IMR-90 (cell line): ENCODE measurements at regions of chr16 and their contacts with region 1.

Region 1: DNA sequence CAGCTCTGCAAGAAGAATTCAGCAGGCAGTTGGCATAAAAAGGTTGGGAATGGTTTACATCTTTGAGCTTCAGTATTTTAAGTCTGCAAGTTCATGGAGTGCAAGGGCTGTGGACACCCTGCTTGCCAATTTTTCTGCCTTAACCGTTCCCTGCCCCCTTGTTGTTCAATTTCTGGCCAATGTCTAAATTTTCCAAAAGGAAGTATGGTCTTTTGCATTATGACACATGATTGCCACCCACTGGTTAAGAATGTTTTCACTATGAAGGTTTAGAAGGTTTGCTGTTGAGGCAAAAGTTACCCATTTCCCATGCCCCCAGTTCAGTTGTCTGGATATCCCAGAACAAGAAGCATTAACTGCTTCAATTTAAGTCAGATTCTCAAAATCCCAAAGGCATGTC is 441.9 kb downstream of the CDH13 start:
- DNase-seq: peak; percentile 46
- ATAC-seq: peak; percentile 40; the same call in 1 of the 2 replicates
- H3K4me3 ChIP-seq: no peak overlapping the region
- H3K27ac ChIP-seq: no peak overlapping the region
- H3K4me1 ChIP-seq: peaks cover 2% of the 10 kb centered on the region; the same call in 1 of the 2 replicates
- H3K27me3 ChIP-seq: no peaks in the 10 kb centered on the region
- CTCF ChIP-seq: peak; percentile 54
- POLR2A ChIP-seq: no peak
- RAD21 ChIP-seq: peak; percentile 56

Region 2: GRCh38 chr16:82456683-82457082 is 612.0 kb before region 1 on chr16:
- CTCF ChIA-PET with region 1: no interaction called
- POLR2A ChIA-PET with region 1: no interaction called
- dilution Hi-C with region 1: no loop called
- in situ Hi-C with region 1: no loop called
- intact Hi-C with region 1: loop called (anchors 2 kb)
- DNase-seq: peak; percentile 36
- ATAC-seq: peak; percentile 93
- H3K4me3 ChIP-seq: no peak overlapping the region
- H3K27ac ChIP-seq: no peak overlapping the region
- H3K4me1 ChIP-seq: no peaks in the 10 kb centered on the region
- H3K27me3 ChIP-seq: peaks cover 1% of the 10 kb centered on the region
- CTCF ChIP-seq: peak; percentile 61
- POLR2A ChIP-seq: no peak
- RAD21 ChIP-seq: peak; percentile 40; the same call in 1 of the 2 replicates

Region 3: GRCh38 chr16:82603784-82604411 is 464.8 kb before region 1 on chr16:
- CTCF ChIA-PET with region 1: no interaction called
- POLR2A ChIA-PET with region 1: no interaction called
- dilution Hi-C with region 1: no loop called
- in situ Hi-C with region 1: no loop called
- intact Hi-C with region 1: loop called (anchors 1 kb)
- DNase-seq: peak; percentile 73
- ATAC-seq: peak; percentile 98
- H3K4me3 ChIP-seq: no peak overlapping the region
- H3K27ac ChIP-seq: no peak overlapping the region
- H3K4me1 ChIP-seq: no peaks in the 10 kb centered on the region
- H3K27me3 ChIP-seq: peaks cover 17% of the 10 kb centered on the region
- CTCF ChIP-seq: peak; percentile 81
- POLR2A ChIP-seq: no peak
- RAD21 ChIP-seq: peak; percentile 82

Region 4: DNA sequence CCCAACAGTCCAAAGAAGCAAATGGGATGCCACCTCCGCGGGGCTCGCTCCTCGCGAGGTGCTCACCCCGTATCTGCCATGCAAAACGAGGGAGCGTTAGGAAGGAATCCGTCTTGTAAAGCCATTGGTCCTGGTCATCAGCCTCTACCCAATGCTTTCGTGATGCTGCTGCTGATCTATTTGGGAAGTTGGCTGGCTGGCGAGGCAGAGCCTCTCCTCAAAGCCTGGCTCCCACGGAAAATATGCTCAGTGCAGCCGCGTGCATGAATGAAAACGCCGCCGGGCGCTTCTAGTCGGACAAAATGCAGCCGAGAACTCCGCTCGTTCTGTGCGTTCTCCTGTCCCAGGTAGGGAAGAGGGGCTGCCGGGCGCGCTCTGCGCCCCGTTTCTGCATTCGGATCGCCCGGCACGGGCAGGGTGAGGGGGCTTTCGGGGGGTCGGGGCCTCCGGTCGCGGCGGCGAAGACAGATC is 441.9 kb before region 1 on chr16 and contains the start of gene CDH13:
- CTCF ChIA-PET with region 1: no interaction called
- POLR2A ChIA-PET with region 1: no interaction called
- dilution Hi-C with region 1: no loop called
- in situ Hi-C with region 1: no loop called
- intact Hi-C with region 1: loop called (anchors 1 kb)
- DNase-seq: peak; percentile 77
- ATAC-seq: peak; percentile 40
- H3K4me3 ChIP-seq: peak within 1 kb of the TSS; percentile 60
- H3K27ac ChIP-seq: peak within 1 kb of the TSS; percentile 46
- H3K4me1 ChIP-seq: peaks cover 18% of the 10 kb centered on the region
- H3K27me3 ChIP-seq: peaks cover 21% of the 10 kb centered on the region
- CTCF ChIP-seq: no peak
- POLR2A ChIP-seq: peak; percentile 66; the same call in 1 of the 2 replicates
- RAD21 ChIP-seq: no peak
- total RNA-seq, gene CDH13: 45.8 and 74.7 TPM in 2 replicates

Region 5: DNA sequence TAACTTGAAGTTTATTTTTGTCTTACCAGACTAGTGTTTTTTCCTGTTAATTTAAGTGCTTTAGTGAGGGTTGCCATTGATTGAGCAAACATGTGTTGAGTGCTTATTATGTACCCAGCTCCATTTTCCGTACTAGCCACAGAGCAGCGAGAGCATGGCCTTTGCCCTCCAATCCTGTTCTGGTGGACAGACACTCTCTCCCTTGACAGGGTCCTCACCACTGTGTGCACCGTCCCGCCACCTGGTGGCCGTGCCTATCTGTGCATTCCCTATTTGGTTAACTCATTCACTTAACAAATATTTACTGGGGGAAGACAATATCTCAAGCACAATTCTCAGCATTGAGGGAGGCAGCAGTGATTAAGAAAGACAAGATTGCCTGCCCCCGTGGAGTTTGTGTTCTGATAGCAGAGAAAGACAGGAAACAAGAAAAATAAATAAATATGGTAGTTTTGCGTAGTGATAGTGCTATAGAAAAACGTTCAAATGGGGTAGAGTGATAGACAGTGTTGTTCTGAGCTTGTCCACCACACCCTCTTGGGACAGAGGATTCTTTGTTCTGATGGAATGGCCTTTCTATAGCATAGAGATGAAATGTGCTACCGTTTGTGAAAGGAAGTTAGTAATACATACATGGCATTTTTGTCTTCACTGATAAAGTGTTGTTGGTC is 428.9 kb before region 1 on chr16:
- CTCF ChIA-PET with region 1: interaction called, 3 read pairs
- POLR2A ChIA-PET with region 1: no interaction called
- dilution Hi-C with region 1: no loop called
- in situ Hi-C with region 1: no loop called
- intact Hi-C with region 1: loop called (anchors 2 kb)
- DNase-seq: peak; percentile 58
- ATAC-seq: peak; percentile 74
- H3K4me3 ChIP-seq: no peak overlapping the region
- H3K27ac ChIP-seq: no peak overlapping the region
- H3K4me1 ChIP-seq: peaks cover 17% of the 10 kb centered on the region
- H3K27me3 ChIP-seq: no peaks in the 10 kb centered on the region
- CTCF ChIP-seq: peak; percentile 74
- POLR2A ChIP-seq: no peak
- RAD21 ChIP-seq: peak; percentile 62

Region 6: DNA sequence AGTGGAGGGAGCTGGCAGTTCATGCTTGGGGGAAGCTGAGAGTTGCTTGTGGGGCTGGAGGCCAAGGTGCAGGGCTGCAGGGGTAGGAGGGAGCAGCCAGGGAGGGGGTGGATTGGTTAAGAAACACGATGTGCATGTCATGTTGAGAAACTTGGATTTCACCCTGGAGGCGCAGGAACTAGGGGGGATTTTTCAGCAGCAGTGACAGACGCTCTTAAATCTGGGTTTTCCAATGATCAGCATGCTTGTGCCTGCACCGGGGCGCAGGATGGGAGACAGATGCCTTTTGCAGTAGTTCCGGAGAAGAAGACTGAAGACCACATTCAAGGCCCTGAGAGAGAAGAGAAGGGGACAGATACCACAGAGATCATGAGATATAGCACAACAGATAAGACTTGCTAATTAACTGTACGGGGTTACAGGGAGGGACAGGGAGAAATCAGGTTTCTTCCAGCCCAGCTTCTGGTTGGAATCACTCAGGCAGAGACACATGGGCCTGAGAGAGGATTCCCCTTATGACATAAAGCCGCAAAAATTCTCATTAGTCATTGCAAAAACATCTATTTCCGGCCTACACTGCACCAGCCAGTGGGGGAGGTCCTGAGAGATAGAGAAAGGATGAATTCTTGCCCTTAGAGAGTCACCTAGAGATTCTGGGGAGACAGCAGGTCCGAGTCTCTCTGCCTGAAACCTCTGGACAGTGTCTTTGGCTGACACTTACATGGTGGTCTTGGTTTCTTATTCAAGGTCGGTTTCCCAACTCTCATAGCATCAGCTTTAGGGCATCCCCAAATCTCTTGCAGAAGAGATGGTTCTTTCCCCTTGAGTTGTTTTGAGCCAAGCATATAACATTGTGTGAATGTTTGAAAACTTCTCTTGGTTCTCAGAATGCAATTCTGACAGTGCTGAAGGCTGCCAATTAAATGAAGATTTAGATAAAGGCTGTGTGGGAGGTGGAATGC is 414.9 kb before region 1 on chr16:
- CTCF ChIA-PET with region 1: no interaction called
- POLR2A ChIA-PET with region 1: no interaction called
- dilution Hi-C with region 1: no loop called
- in situ Hi-C with region 1: no loop called
- intact Hi-C with region 1: no loop called
- DNase-seq: peak; percentile 95
- ATAC-seq: peak; percentile 77
- H3K4me3 ChIP-seq: no peak overlapping the region
- H3K27ac ChIP-seq: peak overlapping the region; percentile 85
- H3K4me1 ChIP-seq: peaks cover 33% of the 10 kb centered on the region
- H3K27me3 ChIP-seq: no peaks in the 10 kb centered on the region
- CTCF ChIP-seq: no peak
- POLR2A ChIP-seq: peak; percentile 70
- RAD21 ChIP-seq: peak; percentile 22

Region 7: GRCh38 chr16:82748026-82748425 is 320.7 kb before region 1 on chr16:
- CTCF ChIA-PET with region 1: no interaction called
- POLR2A ChIA-PET with region 1: no interaction called
- dilution Hi-C with region 1: no loop called
- in situ Hi-C with region 1: no loop called
- intact Hi-C with region 1: loop called (anchors 2 kb)
- DNase-seq: peak; percentile 66
- ATAC-seq: peak; percentile 57; the same call in 1 of the 2 replicates
- H3K4me3 ChIP-seq: no peak overlapping the region
- H3K27ac ChIP-seq: no peak overlapping the region
- H3K4me1 ChIP-seq: no peaks in the 10 kb centered on the region
- H3K27me3 ChIP-seq: no peaks in the 10 kb centered on the region
- CTCF ChIP-seq: peak; percentile 42
- POLR2A ChIP-seq: no peak
- RAD21 ChIP-seq: peak; percentile 43